Aorta (tissue), 5 donors: ENCODE measurements at regions of chr2 and their contacts with region 1.

Region 1: GRCh38 chr2:106542811-106543259 is 55.7 kb downstream of the CD8B2 start:
- DNase-seq: peak; percentile 71 to 89
- ATAC-seq: peak; percentile 88
- H3K4me3 ChIP-seq: no peak overlapping the region
- H3K27ac ChIP-seq: no peak overlapping the region
- H3K4me1 ChIP-seq: no peaks in the 10 kb centered on the region
- H3K27me3 ChIP-seq: no peaks in the 10 kb centered on the region

Region 2: GRCh38 chr2:106582148-106583143 is 39.6 kb after region 1 on chr2:
- intact Hi-C with region 1: loop called in 1 of 2 experiments (anchors 5 kb)
- DNase-seq: peak; percentile 79 to 88
- ATAC-seq: peak; percentile 88
- H3K4me3 ChIP-seq: peak overlapping the region; percentile 18 to 67
- H3K27ac ChIP-seq: no peak overlapping the region
- H3K4me1 ChIP-seq: no peaks in the 10 kb centered on the region
- H3K27me3 ChIP-seq: no peaks in the 10 kb centered on the region

Region 3: GRCh38 chr2:106789197-106789596 is 246.4 kb after region 1 on chr2:
- intact Hi-C with region 1: no loop called
- DNase-seq: no peak
- ATAC-seq: no peak
- H3K4me3 ChIP-seq: no peak overlapping the region
- H3K27ac ChIP-seq: no peak overlapping the region
- H3K4me1 ChIP-seq: peaks cover 0 to 4% of the 10 kb centered on the region in 2 donors
- H3K27me3 ChIP-seq: no peaks in the 10 kb centered on the region